ENCODE measurements at regions of chr22 and their contacts with region 1.

Region 1: GRCh38 chr22:46262449-46263232 is 502 bp downstream of the PKDREJ start:
- DNase-seq: no peak
- H3K4me3 ChIP-seq: no peak overlapping the region
- H3K27ac ChIP-seq: no peak overlapping the region
- H3K4me1 ChIP-seq: peaks cover 11% of the 10 kb centered on the region; the same call in 1 of the 2 replicates
- H3K27me3 ChIP-seq: peaks cover 41% of the 10 kb centered on the region
- CTCF ChIP-seq: no peak

Region 2: GRCh38 chr22:45903355-45904149 is 359.1 kb before region 1 on chr22:
- CTCF ChIA-PET with region 1: no interaction called
- POLR2A ChIA-PET with region 1: no interaction called
- intact Hi-C with region 1: no loop called
- DNase-seq: peak; percentile 72 to 87
- H3K4me3 ChIP-seq: peak overlapping the region; percentile 37; the same call in 1 of the 2 replicates
- H3K27ac ChIP-seq: no peak overlapping the region
- H3K4me1 ChIP-seq: peaks cover 23% of the 10 kb centered on the region
- H3K27me3 ChIP-seq: no peaks in the 10 kb centered on the region
- CTCF ChIP-seq: no peak

Region 3: GRCh38 chr22:46143491-46144147 is 119.0 kb before region 1 on chr22:
- CTCF ChIA-PET with region 1: no interaction called
- POLR2A ChIA-PET with region 1: interaction called, 14 read pairs
- intact Hi-C with region 1: no loop called
- DNase-seq: no peak
- H3K4me3 ChIP-seq: no peak overlapping the region
- H3K27ac ChIP-seq: no peak overlapping the region
- H3K4me1 ChIP-seq: 0 out of 2 replicates have a peak, but pooled peaks cover 5% of the 10 kb centered on the region
- H3K27me3 ChIP-seq: peaks cover 16% of the 10 kb centered on the region
- CTCF ChIP-seq: no peak